ENCODE measurements at regions of chr1 and their contacts with region 1.

Region 1: GRCh38 chr1:93447516-93448291 is at the start of gene FNBP1L:
- DNase-seq: peak; percentile 80
- H3K4me3 Mint-ChIP-seq: peak within 1 kb of the TSS; percentile 100
- H3K27ac Mint-ChIP-seq: peak within 1 kb of the TSS; percentile 95
- H3K4me1 Mint-ChIP-seq: peaks cover 27% of the 10 kb centered on the region
- H3K27me3 Mint-ChIP-seq: no peaks in the 10 kb centered on the region
- CTCF ChIP-seq: no peak
- total RNA-seq, gene FNBP1L: 30.7 and 31.8 TPM in 2 replicates

Region 2: DNA sequence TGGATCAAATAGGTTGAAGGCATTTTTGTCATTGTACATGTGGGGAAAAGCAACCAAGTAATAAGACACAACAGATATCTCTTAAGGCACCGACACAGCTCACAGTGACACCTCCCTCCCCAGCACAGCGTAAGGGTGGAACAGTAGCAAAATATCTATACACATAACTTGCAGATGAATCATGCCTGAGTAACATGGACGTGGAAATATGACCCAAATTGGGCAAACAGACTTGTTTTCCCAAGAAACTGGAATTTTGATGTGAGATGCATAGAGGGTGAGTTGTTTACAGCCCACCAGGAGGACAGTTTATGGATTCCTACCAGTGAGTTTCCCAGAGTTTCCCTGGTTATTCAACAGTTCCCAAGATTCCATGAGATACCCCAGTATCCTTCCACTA is 109.3 kb before region 1 on chr1:
- CTCF ChIA-PET with region 1: no interaction called
- POLR2A ChIA-PET with region 1: interaction called, 19 read pairs
- intact Hi-C with region 1: no loop called
- DNase-seq: peak; percentile 85
- H3K4me3 Mint-ChIP-seq: peak overlapping the region; percentile 28
- H3K27ac Mint-ChIP-seq: peak overlapping the region; percentile 87
- H3K4me1 Mint-ChIP-seq: peaks cover 22% of the 10 kb centered on the region
- H3K27me3 Mint-ChIP-seq: no peaks in the 10 kb centered on the region
- CTCF ChIP-seq: no peak

Region 3: GRCh38 chr1:93519196-93519827 is 71.6 kb after region 1 on chr1:
- CTCF ChIA-PET with region 1: no interaction called
- POLR2A ChIA-PET with region 1: interaction called, 4 read pairs
- intact Hi-C with region 1: loop called (anchors 2 kb)
- DNase-seq: peak; percentile 45
- H3K4me3 Mint-ChIP-seq: no peak overlapping the region
- H3K27ac Mint-ChIP-seq: peak overlapping the region; percentile 1
- H3K4me1 Mint-ChIP-seq: peaks cover 29% of the 10 kb centered on the region
- H3K27me3 Mint-ChIP-seq: no peaks in the 10 kb centered on the region
- CTCF ChIP-seq: no peak

Region 4: GRCh38 chr1:93591676-93592550 is 144.2 kb after region 1 on chr1:
- CTCF ChIA-PET with region 1: interaction called, 6 read pairs
- POLR2A ChIA-PET with region 1: interaction called, 41 read pairs
- intact Hi-C with region 1: no loop called
- DNase-seq: peak; percentile 46
- H3K4me3 Mint-ChIP-seq: no peak overlapping the region
- H3K27ac Mint-ChIP-seq: peak overlapping the region; percentile 49
- H3K4me1 Mint-ChIP-seq: peaks cover 59% of the 10 kb centered on the region
- H3K27me3 Mint-ChIP-seq: no peaks in the 10 kb centered on the region
- CTCF ChIP-seq: no peak

Region 5: DNA sequence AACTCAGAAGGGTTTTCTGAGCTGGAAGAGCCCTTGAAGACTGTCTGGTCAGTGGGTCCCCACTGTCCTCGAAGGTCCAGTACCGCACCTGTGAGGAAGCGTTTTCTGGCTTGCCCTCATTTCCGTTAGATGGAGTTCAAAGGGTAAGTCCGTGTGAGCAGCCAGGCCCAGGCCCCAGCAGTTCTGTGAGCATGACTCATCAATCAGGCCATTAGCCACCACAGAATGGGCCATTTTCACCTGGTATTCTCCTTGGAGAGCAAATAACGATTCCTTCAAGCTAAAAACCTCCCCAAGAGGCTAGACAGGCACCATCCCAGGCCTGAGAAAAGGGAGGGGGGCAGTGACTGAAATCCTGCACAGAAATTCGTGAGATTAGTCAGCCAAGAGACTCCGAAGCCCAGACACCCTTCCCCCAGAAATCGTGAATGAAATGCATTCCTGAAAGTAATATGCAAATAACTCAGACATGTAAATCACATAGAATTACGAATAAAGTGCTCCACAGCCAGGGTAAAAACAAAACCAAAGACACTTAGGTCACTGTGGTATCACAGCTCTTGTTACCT is 168.0 kb after region 1 on chr1:
- CTCF ChIA-PET with region 1: interaction called, 5 read pairs
- POLR2A ChIA-PET with region 1: interaction called, 23 read pairs
- intact Hi-C with region 1: no loop called
- DNase-seq: peak; percentile 60
- H3K4me3 Mint-ChIP-seq: no peak overlapping the region
- H3K27ac Mint-ChIP-seq: peak overlapping the region; percentile 97
- H3K4me1 Mint-ChIP-seq: peaks cover 65% of the 10 kb centered on the region
- H3K27me3 Mint-ChIP-seq: no peaks in the 10 kb centered on the region
- CTCF ChIP-seq: no peak

Region 6: GRCh38 chr1:93878889-93879586 is 431.3 kb after region 1 on chr1 and contains the start of gene DNTTIP2:
- CTCF ChIA-PET with region 1: no interaction called
- POLR2A ChIA-PET with region 1: interaction called, 14 read pairs
- intact Hi-C with region 1: no loop called
- DNase-seq: peak; percentile 91
- H3K4me3 Mint-ChIP-seq: peak within 1 kb of the TSS; percentile 96
- H3K27ac Mint-ChIP-seq: peak within 1 kb of the TSS; percentile 99
- H3K4me1 Mint-ChIP-seq: peaks cover 27% of the 10 kb centered on the region
- H3K27me3 Mint-ChIP-seq: no peaks in the 10 kb centered on the region
- CTCF ChIP-seq: no peak
- total RNA-seq, gene DNTTIP2: 78.1 and 96.5 TPM in 2 replicates

Measured in MCF 10A (cell line).